AG04450 (cell line): ENCODE measurements at regions of chr6 and their contacts with region 1.

Region 1: GRCh38 chr6:26270903-26271667 is 93.9 kb upstream of the BTN3A2 start:
- DNase-seq: no peak
- H3K4me3 ChIP-seq: peak overlapping the region; percentile 65
- H3K27ac ChIP-seq: peak overlapping the region; percentile 68
- H3K27me3 ChIP-seq: no peaks in the 10 kb centered on the region
- CTCF ChIP-seq: no peak

Region 2: DNA sequence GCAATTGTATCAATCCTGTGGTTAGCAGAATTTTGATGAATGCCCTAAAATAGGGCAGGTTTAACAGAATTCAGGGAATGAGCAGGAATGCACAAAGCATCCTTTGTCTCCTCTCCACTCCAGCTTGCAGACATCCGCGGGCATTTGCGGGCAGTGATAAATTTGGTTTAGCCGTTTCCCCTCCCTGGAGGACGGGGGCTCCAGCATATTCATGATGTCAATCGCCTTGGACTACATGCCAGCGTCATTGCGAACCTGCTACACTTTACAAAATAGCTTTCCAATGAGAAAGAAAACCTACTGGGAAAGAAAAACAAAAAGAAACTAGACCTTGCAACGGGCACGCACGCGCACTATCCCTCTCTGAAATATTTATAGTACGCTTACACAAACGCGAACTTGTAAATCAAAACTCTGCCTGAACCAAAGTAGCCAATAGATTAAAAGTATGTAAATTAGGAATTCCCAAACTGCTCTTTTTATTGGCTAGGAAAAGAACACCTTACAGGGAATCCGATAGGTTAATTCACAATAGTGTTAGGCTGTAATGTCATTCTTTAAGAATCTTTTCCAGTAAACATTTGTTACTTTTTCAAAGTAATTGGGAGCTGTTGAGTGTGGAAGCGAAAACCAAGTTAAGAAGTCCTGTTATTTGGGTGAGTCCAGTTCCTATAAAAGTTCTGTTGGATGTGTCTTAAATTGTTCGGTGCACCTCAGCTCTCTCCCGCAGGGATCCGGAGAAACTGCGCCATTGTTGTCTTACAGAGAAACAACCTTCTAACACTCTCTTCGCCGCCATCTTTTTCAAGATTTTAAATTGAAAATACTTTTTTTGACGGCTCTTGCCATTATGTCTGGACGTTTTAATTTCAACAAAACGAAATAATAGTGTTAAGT is 47.2 kb before region 1 on chr6:
- CTCF ChIA-PET with region 1: interaction called, 10 read pairs
- POLR2A ChIA-PET with region 1: interaction called, 12 read pairs
- DNase-seq: peak; percentile 89
- H3K4me3 ChIP-seq: peak overlapping the region; percentile 73
- H3K27ac ChIP-seq: peak overlapping the region; percentile 89
- H3K27me3 ChIP-seq: no peaks in the 10 kb centered on the region
- CTCF ChIP-seq: no peak

Region 3: DNA sequence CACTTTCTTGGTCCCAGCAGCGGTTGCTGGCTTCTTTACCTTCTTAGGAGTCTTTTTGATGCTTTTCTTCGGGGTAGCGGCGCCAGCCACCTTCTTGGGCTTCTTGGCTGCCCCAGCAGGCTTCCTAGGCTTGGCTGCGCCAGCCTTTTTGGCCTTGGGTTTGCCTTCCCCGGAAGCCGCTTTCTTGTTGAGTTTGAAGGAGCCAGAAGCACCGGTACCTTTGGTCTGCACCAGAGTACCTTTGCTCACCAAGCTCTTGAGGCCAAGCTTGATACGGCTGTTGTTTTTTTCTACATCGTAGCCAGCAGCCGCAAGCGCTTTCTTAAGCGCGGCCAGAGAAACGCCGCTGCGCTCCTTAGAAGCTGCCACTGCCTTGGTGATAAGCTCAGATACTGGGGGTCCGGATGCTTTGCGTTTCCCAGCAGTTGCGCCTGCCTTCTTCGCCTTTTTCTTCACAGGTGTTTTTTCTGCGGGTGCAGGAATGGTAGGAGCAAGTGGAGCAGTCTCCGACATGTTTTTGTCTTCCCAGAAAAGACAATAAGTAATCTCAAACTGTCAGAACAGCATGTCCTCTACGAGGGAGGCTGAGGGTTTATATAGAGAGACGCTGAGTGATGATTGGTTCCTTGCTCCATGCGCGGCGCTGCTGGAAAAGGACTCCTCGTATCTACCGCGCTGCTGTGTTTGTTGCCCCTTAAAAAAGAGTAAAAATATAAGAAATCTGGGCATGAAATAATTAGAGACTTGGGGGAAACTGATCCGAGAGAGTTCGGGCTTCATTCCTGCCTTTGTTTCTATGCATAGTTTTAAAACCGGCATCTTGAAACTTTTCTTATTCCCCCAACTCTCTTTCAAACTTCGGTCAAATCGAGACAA is 36.4 kb before region 1 on chr6:
- CTCF ChIA-PET with region 1: interaction called, 4 read pairs
- POLR2A ChIA-PET with region 1: interaction called, 19 read pairs
- DNase-seq: no peak
- H3K4me3 ChIP-seq: peak overlapping the region; percentile 65
- H3K27ac ChIP-seq: peak overlapping the region; percentile 91
- H3K27me3 ChIP-seq: no peaks in the 10 kb centered on the region
- CTCF ChIP-seq: no peak

Region 4: GRCh38 chr6:26249957-26250697 is 21.0 kb before region 1 on chr6:
- CTCF ChIA-PET with region 1: interaction called, 12 read pairs
- POLR2A ChIA-PET with region 1: interaction called, 4 read pairs
- DNase-seq: no peak
- H3K4me3 ChIP-seq: peak overlapping the region; percentile 77
- H3K27ac ChIP-seq: peak overlapping the region; percentile 87
- H3K27me3 ChIP-seq: no peaks in the 10 kb centered on the region
- CTCF ChIP-seq: peak; percentile 50

Region 5: GRCh38 chr6:26285143-26286134 is 14.4 kb after region 1 on chr6:
- CTCF ChIA-PET with region 1: interaction called, 4 read pairs
- POLR2A ChIA-PET with region 1: interaction called, 69 read pairs
- DNase-seq: peak; percentile 97
- H3K4me3 ChIP-seq: peak overlapping the region; percentile 99
- H3K27ac ChIP-seq: peak overlapping the region; percentile 98
- H3K27me3 ChIP-seq: no peaks in the 10 kb centered on the region
- CTCF ChIP-seq: no peak

Region 6: GRCh38 chr6:26336355-26337198 is 65.5 kb after region 1 on chr6:
- CTCF ChIA-PET with region 1: no interaction called
- POLR2A ChIA-PET with region 1: no interaction called
- DNase-seq: no peak
- H3K4me3 ChIP-seq: no peak overlapping the region
- H3K27ac ChIP-seq: no peak overlapping the region
- H3K27me3 ChIP-seq: no peaks in the 10 kb centered on the region
- CTCF ChIP-seq: no peak

Region 7: GRCh38 chr6:26537846-26538571 is 266.9 kb after region 1 on chr6 and contains the start of gene HMGN4:
- CTCF ChIA-PET with region 1: no interaction called
- POLR2A ChIA-PET with region 1: interaction called, 15 read pairs
- DNase-seq: peak; percentile 81
- H3K4me3 ChIP-seq: peak within 1 kb of the TSS; percentile 84
- H3K27ac ChIP-seq: peak within 1 kb of the TSS; percentile 93
- H3K27me3 ChIP-seq: no peaks in the 10 kb centered on the region
- CTCF ChIP-seq: peak; percentile 5; the same call in 1 of the 2 replicates
- polyA plus RNA-seq, gene HMGN4: 59.0 and 72.3 TPM in 2 replicates

Region 8: GRCh38 chr6:28136585-28137504 is 1865.8 kb after region 1 on chr6:
- CTCF ChIA-PET with region 1: no interaction called
- POLR2A ChIA-PET with region 1: no interaction called
- DNase-seq: peak; percentile 94
- H3K4me3 ChIP-seq: peak overlapping the region; percentile 86
- H3K27ac ChIP-seq: peak overlapping the region; percentile 87
- H3K27me3 ChIP-seq: no peaks in the 10 kb centered on the region
- CTCF ChIP-seq: no peak